ENCODE measurements at regions of chr1 and their contacts with region 1.

Region 1: DNA sequence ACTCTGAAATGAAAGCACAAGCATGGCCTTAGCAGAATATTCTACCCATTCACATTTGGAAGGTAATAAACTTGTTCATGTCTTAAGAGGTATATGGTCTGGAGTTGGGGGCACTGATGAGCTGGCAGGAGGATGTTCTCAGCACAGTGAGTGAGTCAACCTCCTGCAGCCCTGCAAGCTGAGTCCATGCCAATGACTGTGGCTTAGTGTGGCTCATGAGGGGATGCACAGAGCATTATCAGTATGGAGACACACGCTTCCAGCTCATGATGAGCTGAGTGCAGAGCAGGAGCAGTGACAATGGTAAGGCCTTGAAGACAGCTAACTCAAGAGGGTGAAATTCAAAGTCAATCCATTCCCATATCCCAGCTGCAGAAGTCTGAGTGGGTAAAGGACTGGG is 102.3 kb downstream of the TNFSF18 start:
- DNase-seq: peak; percentile 89
- H3K4me3 ChIP-seq: no peak overlapping the region
- H3K27ac ChIP-seq: peak overlapping the region; percentile 95
- H3K4me1 ChIP-seq: peaks cover 36% of the 10 kb centered on the region
- H3K27me3 ChIP-seq: no peaks in the 10 kb centered on the region
- CTCF ChIP-seq: no peak
- POLR2A ChIP-seq: peak; percentile 25

Region 2: DNA sequence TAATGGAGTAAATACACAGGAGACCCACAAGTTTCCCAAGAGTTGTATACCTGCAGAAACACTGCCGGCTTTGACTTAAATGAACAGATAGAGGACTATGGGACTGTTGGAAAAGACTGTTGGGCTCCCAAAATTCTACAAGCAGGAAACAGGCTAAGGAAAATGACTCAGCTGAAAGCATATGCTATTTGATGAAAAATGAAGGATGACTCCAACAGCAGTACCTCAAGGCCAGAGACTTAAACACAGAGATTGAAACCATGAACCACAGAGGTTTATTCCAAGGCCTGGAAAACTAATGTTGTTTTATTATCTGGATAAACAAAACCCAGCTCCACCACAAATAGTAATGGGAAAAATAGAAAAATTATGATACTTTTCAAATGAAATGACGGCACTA is 85.4 kb before region 1 on chr1:
- CTCF ChIA-PET with region 1: no interaction called
- POLR2A ChIA-PET with region 1: no interaction called
- dilution Hi-C with region 1: no loop called
- intact Hi-C with region 1: loop called (anchors 2 kb)
- DNase-seq: no peak
- H3K4me3 ChIP-seq: no peak overlapping the region
- H3K27ac ChIP-seq: no peak overlapping the region
- H3K4me1 ChIP-seq: peaks cover 17% of the 10 kb centered on the region
- H3K27me3 ChIP-seq: no peaks in the 10 kb centered on the region
- CTCF ChIP-seq: no peak
- POLR2A ChIP-seq: no peak

Region 3: GRCh38 chr1:172917972-172918371 is 30.5 kb before region 1 on chr1:
- CTCF ChIA-PET with region 1: interaction called, 4 read pairs
- POLR2A ChIA-PET with region 1: no interaction called
- dilution Hi-C with region 1: no loop called
- intact Hi-C with region 1: loop called (anchors 1 kb)
- DNase-seq: peak; percentile 96
- H3K4me3 ChIP-seq: no peak overlapping the region
- H3K27ac ChIP-seq: peak overlapping the region; percentile 84
- H3K4me1 ChIP-seq: peaks cover 62% of the 10 kb centered on the region
- H3K27me3 ChIP-seq: no peaks in the 10 kb centered on the region
- CTCF ChIP-seq: no peak
- POLR2A ChIP-seq: peak; percentile 68

Region 4: GRCh38 chr1:173050865-173051264 is 102.4 kb after region 1 on chr1 and contains the start of gene TNFSF18:
- CTCF ChIA-PET with region 1: interaction called, 5 read pairs
- POLR2A ChIA-PET with region 1: interaction called, 3 read pairs
- dilution Hi-C with region 1: no loop called
- intact Hi-C with region 1: loop called (anchors 5 kb)
- DNase-seq: peak; percentile 96
- H3K4me3 ChIP-seq: peak within 1 kb of the TSS in 2 of 3 experiments; percentile 1 to 63
- H3K27ac ChIP-seq: peak within 1 kb of the TSS; percentile 54
- H3K4me1 ChIP-seq: peaks cover 52% of the 10 kb centered on the region
- H3K27me3 ChIP-seq: no peaks in the 10 kb centered on the region
- CTCF ChIP-seq: no peak
- POLR2A ChIP-seq: no peak
- total RNA-seq, gene TNFSF18: 39.4 and 39.9 TPM in 2 replicates

Region 5: DNA sequence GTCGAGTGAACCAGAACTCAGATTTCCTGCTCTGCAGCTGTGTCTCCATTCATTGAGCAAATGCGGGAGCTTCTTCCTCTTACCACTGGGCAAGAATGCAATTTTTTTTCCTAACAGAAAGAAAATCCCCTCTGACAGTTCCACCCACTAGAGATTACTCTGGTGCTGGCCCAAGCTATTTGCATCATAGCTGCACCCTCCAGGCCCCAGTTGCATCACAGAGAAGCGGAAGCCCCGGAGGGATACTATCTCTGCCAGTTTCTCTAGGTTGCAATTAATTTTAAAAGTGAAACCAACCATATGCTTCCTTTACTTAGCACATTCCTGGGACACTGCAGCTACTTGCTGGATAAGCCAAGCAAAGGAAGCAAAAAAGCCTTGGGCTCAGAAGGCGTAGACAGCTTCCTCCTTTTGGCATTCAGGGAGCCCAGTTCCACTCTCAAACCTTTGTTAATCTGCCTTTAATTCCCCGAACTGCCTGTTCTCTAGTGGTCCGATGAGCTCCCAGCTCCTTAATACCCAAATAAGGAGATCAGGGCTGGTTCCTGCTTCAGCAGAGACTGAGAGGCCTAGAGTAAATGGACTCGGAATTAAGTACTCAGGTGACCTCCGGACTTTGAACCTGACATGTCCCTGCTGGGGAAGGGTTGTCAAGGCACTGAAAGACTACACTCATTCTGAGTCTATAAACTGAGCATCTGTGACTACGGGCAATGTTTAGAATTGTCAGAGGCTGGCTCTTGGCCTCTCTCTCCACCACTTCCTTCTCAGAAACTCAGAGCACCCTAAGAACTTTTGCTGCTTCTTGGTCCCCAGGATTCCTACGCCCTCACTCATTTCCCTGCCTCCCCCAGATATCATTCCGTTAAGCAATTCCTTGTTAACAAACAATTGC is 174.7 kb after region 1 on chr1:
- CTCF ChIA-PET with region 1: no interaction called
- POLR2A ChIA-PET with region 1: no interaction called
- dilution Hi-C with region 1: no loop called
- intact Hi-C with region 1: loop called (anchors 5 kb)
- DNase-seq: peak; percentile 65
- H3K4me3 ChIP-seq: peak overlapping the region in 2 of 3 experiments; percentile 6 to 52
- H3K27ac ChIP-seq: peak overlapping the region; percentile 1
- H3K4me1 ChIP-seq: peaks cover 18% of the 10 kb centered on the region
- H3K27me3 ChIP-seq: no peaks in the 10 kb centered on the region
- CTCF ChIP-seq: no peak
- POLR2A ChIP-seq: no peak

Region 6: DNA sequence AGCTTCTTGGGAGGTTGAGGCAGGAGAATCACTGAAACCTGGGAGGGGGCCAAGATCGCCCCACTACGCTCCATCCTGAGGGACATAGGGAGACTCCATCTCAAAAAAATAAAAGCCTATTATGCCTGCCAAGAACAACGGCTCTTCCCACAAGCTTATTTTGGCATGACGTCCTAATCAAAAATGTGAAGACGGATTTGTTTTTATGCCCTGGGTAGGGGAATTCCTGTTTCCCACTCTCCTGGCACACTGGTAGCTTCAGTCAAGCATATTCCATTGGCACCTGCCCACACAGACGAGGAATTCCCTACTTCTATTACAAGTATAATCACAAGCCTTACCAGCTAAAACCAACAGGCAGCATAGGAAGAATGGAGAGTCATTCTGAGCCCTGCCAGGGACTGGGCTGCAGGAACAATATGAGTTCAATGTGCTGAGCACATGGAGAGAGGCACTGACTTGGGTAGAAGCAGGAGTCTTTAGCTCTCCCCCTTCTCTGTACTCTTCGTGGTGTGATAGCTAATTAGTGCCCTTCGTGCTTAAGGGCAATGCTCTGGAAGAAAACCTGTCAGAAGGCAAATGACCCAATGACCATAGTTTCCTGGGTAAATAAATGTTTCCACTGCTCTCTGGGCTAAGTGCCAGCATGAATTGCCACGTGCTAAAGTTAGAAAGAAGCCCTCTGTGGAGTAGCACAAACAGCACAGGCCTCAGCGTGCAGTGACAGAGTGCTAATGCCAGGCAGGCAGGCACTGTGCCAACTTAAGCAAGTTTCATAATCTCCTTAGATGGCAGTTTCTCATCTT is 241.8 kb after region 1 on chr1:
- CTCF ChIA-PET with region 1: interaction called, 8 read pairs
- POLR2A ChIA-PET with region 1: no interaction called
- dilution Hi-C with region 1: loop called (anchors 25 kb)
- intact Hi-C with region 1: no loop called
- DNase-seq: peak; percentile 99
- H3K4me3 ChIP-seq: no peak overlapping the region
- H3K27ac ChIP-seq: peak overlapping the region; percentile 98
- H3K4me1 ChIP-seq: peaks cover 58% of the 10 kb centered on the region
- H3K27me3 ChIP-seq: no peaks in the 10 kb centered on the region
- CTCF ChIP-seq: no peak
- POLR2A ChIP-seq: peak; percentile 35

Measured in endothelial cell of umbilical vein (primary cell).